A673 (cell line): ENCODE measurements at regions of chrX and their contacts with region 1.

Region 1: DNA sequence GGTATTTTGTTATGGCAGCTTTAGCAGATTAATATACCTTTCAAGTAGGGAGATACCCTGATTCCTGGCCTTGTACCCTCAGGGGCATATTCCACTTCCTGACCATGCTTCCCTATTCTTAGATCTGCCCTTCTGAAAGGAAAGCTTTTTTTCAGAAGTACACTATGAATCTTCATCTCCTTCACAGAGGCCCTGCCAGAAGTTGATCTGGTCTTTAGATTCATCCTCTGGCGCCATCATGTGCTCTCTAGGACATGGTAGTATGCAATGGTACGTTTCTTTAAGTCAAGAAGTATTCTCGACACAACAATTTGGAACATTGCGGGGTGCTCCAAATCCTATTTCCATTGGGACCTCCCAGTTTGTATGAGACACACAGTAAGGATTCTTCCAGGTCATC is 39.6 kb upstream of the DIPK2B start:
- DNase-seq: peak; percentile 7
- H3K4me3 ChIP-seq: no peak overlapping the region
- H3K27ac ChIP-seq: no peak overlapping the region
- H3K4me1 ChIP-seq: no peaks in the 10 kb centered on the region
- H3K27me3 ChIP-seq: no peaks in the 10 kb centered on the region
- CTCF ChIP-seq: peak; percentile 30; the same call in 1 of the 2 replicates

Region 2: DNA sequence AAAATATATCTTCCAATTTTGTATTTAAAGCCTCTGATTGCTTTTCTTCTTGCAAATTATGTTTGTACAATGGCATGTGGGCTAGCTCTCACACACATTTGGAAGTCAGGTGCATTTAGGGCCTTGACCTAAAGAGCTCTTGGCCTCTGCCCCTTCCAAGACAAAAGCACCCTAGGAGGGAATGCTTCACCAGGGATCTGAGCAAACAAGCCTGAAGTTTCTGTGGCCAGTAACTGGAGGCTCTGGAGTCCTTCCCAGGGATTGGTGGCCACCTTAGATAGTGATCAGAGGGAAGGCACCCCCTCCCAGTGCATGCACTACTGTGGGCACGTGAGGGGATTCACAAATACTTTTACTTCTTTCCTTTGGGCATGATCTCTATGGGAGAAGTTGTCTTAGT is 20.7 kb after region 1 on chrX:
- CTCF ChIA-PET with region 1: no interaction called
- POLR2A ChIA-PET with region 1: interaction called, 22 read pairs
- intact Hi-C with region 1: no loop called
- DNase-seq: no peak
- H3K4me3 ChIP-seq: no peak overlapping the region
- H3K27ac ChIP-seq: no peak overlapping the region
- H3K4me1 ChIP-seq: no peaks in the 10 kb centered on the region
- H3K27me3 ChIP-seq: no peaks in the 10 kb centered on the region
- CTCF ChIP-seq: no peak